ENCODE measurements at regions of chr3 and their contacts with region 1.

Region 1: GRCh38 chr3:82080261-82080660 is 318.8 kb upstream of the GBE1 start:
- DNase-seq: peak; percentile 61
- H3K4me3 ChIP-seq: no peak overlapping the region
- H3K27ac ChIP-seq: peak overlapping the region; percentile 79
- H3K4me1 ChIP-seq: peaks cover 33% of the 10 kb centered on the region
- H3K27me3 ChIP-seq: no peaks in the 10 kb centered on the region
- CTCF ChIP-seq: no peak
- POLR2A ChIP-seq: no peak

Region 2: DNA sequence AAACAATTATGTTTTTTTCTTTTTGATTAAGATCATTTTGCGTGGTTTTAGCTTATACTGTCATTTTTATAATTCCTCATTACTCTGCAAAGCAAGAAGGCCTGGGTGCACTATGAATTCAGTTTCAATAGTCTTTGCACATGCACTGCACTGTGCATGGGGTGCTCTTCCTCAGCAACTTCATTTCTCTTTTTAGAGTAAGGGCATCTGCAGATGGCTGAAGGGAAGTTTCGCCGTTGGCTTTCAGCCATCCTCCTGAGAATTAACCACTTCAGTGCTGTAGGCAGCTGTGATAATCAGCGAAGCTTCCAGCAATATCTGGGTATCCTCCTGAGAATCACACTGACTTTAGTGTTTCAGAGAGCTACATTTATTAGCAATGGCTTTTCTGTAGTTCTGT is 603.6 kb before region 1 on chr3:
- CTCF ChIA-PET with region 1: no interaction called
- POLR2A ChIA-PET with region 1: no interaction called
- dilution Hi-C with region 1: no loop called
- intact Hi-C with region 1: loop called (anchors 2 kb)
- DNase-seq: no peak
- H3K4me3 ChIP-seq: no peak overlapping the region
- H3K27ac ChIP-seq: no peak overlapping the region
- H3K4me1 ChIP-seq: peaks cover 26% of the 10 kb centered on the region
- H3K27me3 ChIP-seq: no peaks in the 10 kb centered on the region
- CTCF ChIP-seq: no peak
- POLR2A ChIP-seq: no peak